Ovary (tissue), 10 donors: ENCODE measurements at regions of chr6 and their contacts with region 1.

Region 1: DNA sequence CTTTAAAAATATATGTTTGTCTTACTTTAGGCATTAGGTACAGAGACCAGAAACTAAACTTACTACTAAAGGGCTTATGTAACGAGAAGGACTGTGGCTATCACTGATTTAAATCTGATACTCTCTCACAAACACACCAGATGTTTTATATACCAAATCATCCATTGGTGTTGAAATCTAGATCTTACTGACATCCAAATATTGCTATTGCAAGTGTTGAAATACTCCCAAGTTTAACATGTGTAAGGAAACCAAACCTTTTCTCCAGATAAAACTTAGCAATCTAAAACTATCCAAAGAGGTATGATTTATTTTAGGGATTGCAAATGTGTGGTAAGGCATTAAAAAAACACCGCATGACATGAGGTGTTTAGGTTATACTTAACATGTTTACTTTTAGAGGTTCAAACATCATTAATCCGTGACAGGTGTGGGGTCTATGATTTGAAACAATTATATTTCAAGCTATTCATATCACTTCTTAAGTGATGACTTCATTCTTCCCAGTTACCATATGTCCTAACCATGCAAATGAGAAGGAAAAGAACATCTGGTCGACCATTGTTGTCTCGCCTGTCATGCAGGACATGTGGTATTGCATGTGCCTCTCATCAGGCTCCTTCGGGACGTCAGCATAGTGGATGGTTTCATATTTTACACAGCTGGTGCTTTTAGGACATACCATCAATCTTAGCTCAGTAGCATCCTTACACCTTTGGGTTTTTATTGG is 168.3 kb upstream of the SPACA1 start:
- DNase-seq: no peak
- H3K4me3 ChIP-seq: no peak overlapping the region
- H3K27ac ChIP-seq: no peak overlapping the region
- H3K4me1 ChIP-seq: no peaks in the 10 kb centered on the region
- H3K27me3 ChIP-seq: no peaks in the 10 kb centered on the region
- CTCF ChIP-seq: no peak
- EP300 ChIP-seq: no peak
- POLR2A ChIP-seq: no peak

Region 2: GRCh38 chr6:87914637-87915395 is 35.5 kb after region 1 on chr6:
- intact Hi-C with region 1: loop called in 1 of 4 experiments (anchors 5 kb)
- DNase-seq: no peak
- H3K4me3 ChIP-seq: no peak overlapping the region
- H3K27ac ChIP-seq: no peak overlapping the region
- H3K4me1 ChIP-seq: no peaks in the 10 kb centered on the region
- H3K27me3 ChIP-seq: no peaks in the 10 kb centered on the region
- CTCF ChIP-seq: no peak
- EP300 ChIP-seq: no peak
- POLR2A ChIP-seq: no peak